ENCODE measurements at regions of chr4 and their contacts with region 1.

Region 1: DNA sequence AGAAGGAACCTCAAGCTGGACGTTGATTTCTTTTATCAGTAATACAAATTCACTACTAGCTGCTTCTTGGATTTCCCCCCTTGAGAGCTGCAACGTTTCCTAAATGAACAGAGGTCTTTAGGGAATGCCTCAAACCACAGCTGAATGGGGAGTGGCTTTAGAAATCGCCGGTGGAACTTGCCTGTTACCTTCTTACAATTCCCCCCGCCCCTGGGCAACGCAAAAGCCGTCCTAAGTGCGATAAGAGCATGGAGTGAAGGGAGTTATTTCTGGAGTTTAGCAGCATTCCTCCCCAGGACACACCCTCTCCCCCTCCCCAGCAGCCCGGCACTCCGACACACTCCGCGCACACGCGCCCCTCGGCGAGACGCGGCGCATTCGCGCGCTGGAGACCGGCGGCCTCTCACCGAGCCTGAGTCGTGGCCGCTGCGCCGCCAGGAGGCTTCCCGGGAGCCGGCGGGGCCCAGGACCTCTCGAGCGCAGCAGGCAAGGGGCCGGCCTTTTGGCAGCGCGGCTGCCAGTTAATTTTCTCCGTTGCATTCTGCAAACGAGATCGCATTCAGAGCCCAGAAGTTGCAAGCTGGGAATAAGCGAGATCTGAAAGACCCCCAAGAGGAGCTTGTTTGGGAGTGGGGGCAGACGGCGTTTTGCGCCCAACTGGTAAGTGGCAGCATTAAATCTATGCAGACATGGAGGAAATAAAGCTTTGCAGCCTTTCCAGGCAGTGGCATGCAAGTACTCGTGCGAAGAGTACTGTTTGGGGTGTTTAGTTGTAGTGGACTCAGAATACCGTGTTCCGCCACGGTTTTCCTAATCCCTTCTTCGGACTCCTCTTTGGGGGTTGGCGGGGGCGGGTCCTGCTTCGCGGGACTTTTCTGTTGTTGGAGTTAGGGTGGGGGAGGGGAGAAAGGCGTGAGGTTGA is 134.7 kb downstream of the PALLD start:
- DNase-seq: peak in 1 of 2 donors; percentile 73
- H3K4me3 ChIP-seq: peak overlapping the region; percentile 69 to 72
- H3K27ac ChIP-seq: peak overlapping the region; percentile 70 to 81
- H3K4me1 ChIP-seq: peaks cover 4 to 25% of the 10 kb centered on the region in 2 donors
- H3K27me3 ChIP-seq: no peaks in the 10 kb centered on the region
- CTCF ChIP-seq: peak; percentile 40 to 50 (median 47)

Region 2: GRCh38 chr4:168694648-168695047 is 63.1 kb after region 1 on chr4:
- intact Hi-C with region 1: loop called (anchors 2 kb)
- DNase-seq: no peak
- H3K4me3 ChIP-seq: no peak overlapping the region
- H3K27ac ChIP-seq: no peak overlapping the region
- H3K4me1 ChIP-seq: peaks cover 0 to 3% of the 10 kb centered on the region in 2 donors
- H3K27me3 ChIP-seq: no peaks in the 10 kb centered on the region
- CTCF ChIP-seq: no peak

Region 3: GRCh38 chr4:168765726-168766125 is 134.2 kb after region 1 on chr4:
- intact Hi-C with region 1: no loop called
- DNase-seq: peak in 1 of 2 donors; percentile 82
- H3K4me3 ChIP-seq: no peak overlapping the region
- H3K27ac ChIP-seq: peak overlapping the region; percentile 82 to 90
- H3K4me1 ChIP-seq: peaks cover 0 to 46% of the 10 kb centered on the region in 2 donors
- H3K27me3 ChIP-seq: no peaks in the 10 kb centered on the region
- CTCF ChIP-seq: no peak

Measured in ascending aorta (tissue), 2 donors.